Caco-2 (cell line): ENCODE measurements at regions of chr2 and their contacts with region 1.

Region 1: GRCh38 chr2:162545250-162545649 is 201.3 kb downstream of the GCA start:
- DNase-seq: peak; percentile 42 to 46
- H3K4me3 ChIP-seq: no peak overlapping the region
- H3K4me3 Mint-ChIP-seq: no peak overlapping the region
- H3K27ac Mint-ChIP-seq: no peak overlapping the region
- H3K4me1 ChIP-seq: peaks cover 23% of the 10 kb centered on the region
- H3K4me1 Mint-ChIP-seq: peaks cover 13% of the 10 kb centered on the region
- H3K27me3 ChIP-seq: no peaks in the 10 kb centered on the region
- H3K27me3 Mint-ChIP-seq: no peaks in the 10 kb centered on the region
- CTCF ChIP-seq: no peak

Region 2: GRCh38 chr2:162379719-162380580 is 165.3 kb before region 1 on chr2:
- CTCF ChIA-PET with region 1: no interaction called
- POLR2A ChIA-PET with region 1: no interaction called
- intact Hi-C with region 1: no loop called
- DNase-seq: no peak
- H3K4me3 ChIP-seq: no peak overlapping the region
- H3K4me3 Mint-ChIP-seq: no peak overlapping the region
- H3K27ac Mint-ChIP-seq: no peak overlapping the region
- H3K4me1 ChIP-seq: no peaks in the 10 kb centered on the region
- H3K4me1 Mint-ChIP-seq: no peaks in the 10 kb centered on the region
- H3K27me3 ChIP-seq: no peaks in the 10 kb centered on the region
- H3K27me3 Mint-ChIP-seq: peaks cover 11% of the 10 kb centered on the region
- CTCF ChIP-seq: no peak

Region 3: GRCh38 chr2:162574615-162575452 is 29.6 kb after region 1 on chr2:
- CTCF ChIA-PET with region 1: no interaction called
- POLR2A ChIA-PET with region 1: no interaction called
- intact Hi-C with region 1: loop called (anchors 1 kb)
- DNase-seq: peak; percentile 79 to 83
- H3K4me3 ChIP-seq: no peak overlapping the region
- H3K4me3 Mint-ChIP-seq: peak overlapping the region; percentile 46
- H3K27ac Mint-ChIP-seq: peak overlapping the region; percentile 85
- H3K4me1 ChIP-seq: peaks cover 39% of the 10 kb centered on the region
- H3K4me1 Mint-ChIP-seq: peaks cover 38% of the 10 kb centered on the region
- H3K27me3 ChIP-seq: no peaks in the 10 kb centered on the region
- H3K27me3 Mint-ChIP-seq: no peaks in the 10 kb centered on the region
- CTCF ChIP-seq: peak in 1 of 2 experiments; percentile 1